PC-3 (cell line): ENCODE measurements at regions of chr20 and their contacts with region 1.

Region 1: DNA sequence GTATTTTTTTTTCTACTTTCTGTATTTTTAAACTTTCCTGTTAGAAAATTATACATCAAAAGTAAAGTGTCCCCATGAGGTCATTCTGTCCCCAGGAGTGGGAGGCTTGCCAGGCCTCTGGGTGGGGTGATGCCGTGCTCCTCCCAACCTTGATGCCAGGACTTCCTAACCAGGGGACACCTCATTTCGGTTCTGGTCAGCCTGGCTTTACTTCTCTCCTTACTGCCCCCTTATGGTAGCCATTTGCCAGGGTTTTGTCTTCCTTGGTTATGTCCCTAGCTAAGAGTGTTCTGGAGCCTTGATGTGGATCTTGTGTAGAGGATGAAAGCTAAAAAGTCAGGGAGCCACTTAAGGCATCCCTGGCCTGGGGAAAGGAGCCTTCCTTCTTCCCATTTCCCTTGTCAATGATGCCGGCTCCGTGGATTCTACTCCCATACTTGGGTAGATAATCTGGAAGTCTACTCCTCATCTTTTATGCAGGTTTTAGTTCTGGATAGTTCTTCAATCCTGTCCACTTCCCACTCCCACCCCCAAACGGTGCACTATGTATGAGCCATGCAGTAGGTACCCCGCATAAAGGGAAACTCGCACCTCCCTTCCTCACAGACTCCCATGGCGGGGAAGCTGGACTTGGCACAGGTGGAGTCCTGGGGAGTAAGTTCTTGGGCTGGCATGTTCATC is 164.1 kb upstream of the SALL4 start:
- DNase-seq: peak; percentile 95
- ATAC-seq: peak; percentile 99
- H3K4me3 ChIP-seq: no peak overlapping the region
- H3K27ac ChIP-seq: no peak overlapping the region
- H3K4me1 ChIP-seq: no peaks in the 10 kb centered on the region
- H3K27me3 ChIP-seq: no peaks in the 10 kb centered on the region
- CTCF ChIP-seq: peak; percentile 97

Region 2: GRCh38 chr20:51695574-51696303 is 270.7 kb before region 1 on chr20:
- CTCF ChIA-PET with region 1: interaction called, 12 read pairs
- POLR2A ChIA-PET with region 1: no interaction called
- intact Hi-C with region 1: loop called (anchors 5 kb)
- DNase-seq: peak; percentile 95
- ATAC-seq: peak; percentile 89
- H3K4me3 ChIP-seq: peak overlapping the region; percentile 50
- H3K27ac ChIP-seq: peak overlapping the region; percentile 90
- H3K4me1 ChIP-seq: peaks cover 36% of the 10 kb centered on the region
- H3K27me3 ChIP-seq: no peaks in the 10 kb centered on the region
- CTCF ChIP-seq: no peak

Region 3: GRCh38 chr20:51800060-51800794 is 166.2 kb before region 1 on chr20:
- CTCF ChIA-PET with region 1: interaction called, 10 read pairs
- POLR2A ChIA-PET with region 1: no interaction called
- intact Hi-C with region 1: loop called (anchors 1 kb)
- DNase-seq: peak; percentile 92
- ATAC-seq: peak; percentile 89
- H3K4me3 ChIP-seq: peak overlapping the region; percentile 73
- H3K27ac ChIP-seq: no peak overlapping the region
- H3K4me1 ChIP-seq: peaks cover 33% of the 10 kb centered on the region
- H3K27me3 ChIP-seq: no peaks in the 10 kb centered on the region
- CTCF ChIP-seq: peak; percentile 100

Region 4: DNA sequence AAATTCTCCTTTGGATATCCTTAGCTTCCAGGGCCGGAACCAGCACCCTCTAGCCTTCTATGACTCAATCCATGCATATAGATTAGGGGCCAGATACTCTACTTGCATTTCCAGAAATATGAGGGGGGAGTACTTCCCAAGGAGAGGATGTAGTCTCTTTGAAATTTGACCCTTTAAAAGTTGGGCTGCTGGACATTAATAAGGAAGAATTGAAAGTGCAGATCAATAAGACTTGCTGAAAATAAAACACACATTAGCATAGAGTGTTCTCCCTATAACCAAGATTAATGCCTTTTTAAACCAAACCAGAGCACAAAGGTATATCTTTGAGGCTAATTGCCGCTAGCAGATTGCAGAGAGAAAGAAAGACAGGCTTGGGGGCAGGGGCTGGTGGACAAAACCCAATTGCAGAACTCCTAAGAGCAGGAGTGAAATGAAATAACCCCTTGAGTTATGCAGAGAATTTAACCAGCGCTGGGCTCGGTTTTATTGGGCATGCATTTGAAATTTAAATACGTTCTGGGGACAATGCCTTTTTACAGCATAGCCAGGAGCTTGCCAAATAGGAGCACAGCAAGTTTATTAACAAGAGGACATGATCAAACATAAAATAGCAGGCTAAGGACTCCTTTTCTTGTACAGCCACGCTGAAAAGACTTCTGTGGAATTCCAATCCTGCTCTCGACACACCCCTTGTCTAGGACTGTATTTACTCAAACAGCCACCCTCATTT is 55.9 kb before region 1 on chr20:
- CTCF ChIA-PET with region 1: no interaction called
- POLR2A ChIA-PET with region 1: no interaction called
- intact Hi-C with region 1: loop called (anchors 5 kb)
- DNase-seq: peak; percentile 88
- ATAC-seq: peak; percentile 94
- H3K4me3 ChIP-seq: peak overlapping the region; percentile 55
- H3K27ac ChIP-seq: peak overlapping the region; percentile 66
- H3K4me1 ChIP-seq: peaks cover 30% of the 10 kb centered on the region
- H3K27me3 ChIP-seq: no peaks in the 10 kb centered on the region
- CTCF ChIP-seq: no peak

Region 5: DNA sequence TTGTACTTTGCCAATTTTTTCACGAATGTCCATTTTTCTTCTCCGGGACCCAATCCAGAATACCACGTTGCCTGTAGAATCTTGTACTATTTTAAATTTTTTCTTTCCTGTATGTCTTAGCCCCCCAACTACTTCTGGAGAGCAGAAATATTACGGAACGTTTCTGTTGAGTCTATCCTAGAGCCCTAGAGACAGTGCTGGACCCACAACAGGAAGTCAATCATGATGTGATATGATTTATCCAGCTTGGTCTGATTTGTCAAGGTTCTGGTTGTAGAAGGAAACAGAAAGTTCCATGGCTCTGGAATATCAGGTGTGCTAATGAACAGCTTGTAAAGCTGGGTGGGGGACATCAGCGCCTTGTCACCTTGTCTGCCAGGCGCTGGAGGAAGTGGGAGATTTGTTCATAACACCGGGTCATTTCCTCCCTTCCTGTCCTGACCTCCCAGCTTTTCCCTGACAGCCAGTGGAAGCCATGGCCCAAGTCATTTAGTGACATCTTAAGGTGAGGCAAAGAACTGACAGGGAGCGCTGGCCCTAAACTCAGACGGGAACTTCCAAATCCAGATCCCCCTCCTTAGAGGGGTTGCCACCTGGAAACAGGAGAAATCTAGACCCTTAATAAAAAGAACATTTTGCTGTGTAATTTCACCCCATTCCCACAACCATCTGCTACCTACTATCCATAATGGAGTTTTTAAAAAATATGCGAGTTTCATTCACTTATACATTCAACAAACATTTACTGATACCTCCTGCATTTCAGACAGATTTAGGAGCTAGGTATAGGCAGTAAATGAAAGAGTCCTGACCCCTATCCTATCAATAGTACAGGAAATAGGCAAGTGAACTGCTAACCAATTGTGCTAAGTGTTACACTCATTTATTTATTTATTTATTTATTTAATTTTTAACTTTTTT is 94.6 kb after region 1 on chr20:
- CTCF ChIA-PET with region 1: no interaction called
- POLR2A ChIA-PET with region 1: no interaction called
- intact Hi-C with region 1: loop called (anchors 10 kb)
- DNase-seq: peak; percentile 84
- ATAC-seq: peak; percentile 72
- H3K4me3 ChIP-seq: no peak overlapping the region
- H3K27ac ChIP-seq: no peak overlapping the region
- H3K4me1 ChIP-seq: peaks cover 9% of the 10 kb centered on the region
- H3K27me3 ChIP-seq: no peaks in the 10 kb centered on the region
- CTCF ChIP-seq: peak; percentile 96

Region 6: GRCh38 chr20:52105442-52106422 is 139.3 kb after region 1 on chr20:
- CTCF ChIA-PET with region 1: no interaction called
- POLR2A ChIA-PET with region 1: no interaction called
- intact Hi-C with region 1: no loop called
- DNase-seq: peak; percentile 50
- ATAC-seq: peak; percentile 64
- H3K4me3 ChIP-seq: peak overlapping the region; percentile 55
- H3K27ac ChIP-seq: no peak overlapping the region
- H3K4me1 ChIP-seq: no peaks in the 10 kb centered on the region; the same call in 1 of the 2 replicates
- H3K27me3 ChIP-seq: no peaks in the 10 kb centered on the region
- CTCF ChIP-seq: peak; percentile 68